HepG2 (cell line): ENCODE measurements at regions of chr19 and their contacts with region 1.

Region 1: DNA sequence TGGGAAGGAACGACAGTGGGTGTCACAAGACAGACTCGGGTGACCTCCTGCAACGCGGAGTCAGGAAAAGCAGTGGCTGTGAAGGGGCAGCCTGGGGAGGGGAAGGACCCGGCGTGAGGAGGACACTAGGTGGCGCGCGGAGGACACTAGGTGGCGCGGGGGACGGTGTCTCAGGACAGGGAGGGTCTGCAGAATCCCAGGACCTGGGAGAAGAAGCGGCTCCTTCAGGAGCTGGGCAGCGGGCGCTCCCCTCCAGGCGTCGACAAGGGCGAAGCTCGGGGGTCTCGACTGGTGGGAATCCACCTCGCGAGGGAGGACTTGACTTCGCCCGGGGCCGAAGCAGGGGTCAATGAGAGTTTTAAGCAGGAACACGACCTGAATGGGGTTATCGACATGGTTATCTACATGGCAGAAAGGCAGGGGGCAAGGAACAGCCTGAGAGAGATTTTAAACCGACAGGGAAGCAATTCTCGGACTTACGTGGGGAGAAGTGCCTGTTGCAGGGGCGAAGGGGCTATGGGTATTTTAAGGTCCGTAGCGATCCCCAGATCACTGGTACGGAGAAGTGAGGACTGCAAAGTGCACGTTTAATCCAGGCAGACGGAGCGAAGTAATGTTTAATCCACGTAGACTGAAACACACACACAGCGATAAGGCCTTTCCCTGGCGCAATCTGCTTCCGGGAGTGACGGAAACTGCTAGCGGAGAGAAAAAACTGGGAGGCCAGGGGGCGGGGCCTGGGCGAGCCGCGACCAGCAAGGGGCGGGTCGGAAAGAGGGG is at the start of gene ZNF616:
- DNase-seq: peak; percentile 89
- ATAC-seq: peak; percentile 97
- H3K4me3 ChIP-seq: peak within 1 kb of the TSS; percentile 92 to 96 (median 93)
- H3K27ac ChIP-seq: peak within 1 kb of the TSS; percentile 94
- H3K4me1 ChIP-seq: peaks cover 25% of the 10 kb centered on the region
- H3K27me3 ChIP-seq: no peaks in the 10 kb centered on the region; a peak in 1 of 5 replicates
- CTCF ChIP-seq: peak; percentile 97
- EP300 ChIP-seq: 0 out of 4 replicates have a peak, but pooled peaks of 1 of the 2 experiments have one; percentile 7
- POLR2A ChIP-seq: peak; percentile 81 to 83
- RAD21 ChIP-seq: peak; percentile 87
- total RNA-seq, gene ZNF616: 10.4 and 19.8 TPM in 2 replicates

Region 2: GRCh38 chr19:51986309-51987291 is 152.8 kb before region 1 on chr19 and contains the start of gene ZNF350:
- CTCF ChIA-PET with region 1: no interaction called
- POLR2A ChIA-PET with region 1: no interaction called
- in situ Hi-C with region 1: no loop called
- intact Hi-C with region 1: no loop called
- DNase-seq: peak; percentile 93
- ATAC-seq: peak; percentile 96
- H3K4me3 ChIP-seq: peak within 1 kb of the TSS; percentile 84 to 94 (median 88)
- H3K27ac ChIP-seq: peak within 1 kb of the TSS; percentile 72
- H3K4me1 ChIP-seq: peaks cover 10% of the 10 kb centered on the region; the same call in 1 of the 2 replicates
- H3K27me3 ChIP-seq: peaks cover 0 to 7% of the 10 kb centered on the region in 2 experiments; a peak in 1 of 5 replicates
- CTCF ChIP-seq: no peak
- EP300 ChIP-seq: 0 out of 4 replicates have a peak, but pooled peaks of 1 of the 2 experiments have one; percentile 46
- POLR2A ChIP-seq: peak; percentile 53 to 72; a peak in 3 of 4 replicates
- RAD21 ChIP-seq: peak; percentile 34; the same call in 1 of the 2 replicates
- total RNA-seq, gene ZNF350: 6.9 and 10.0 TPM in 2 replicates

Region 3: DNA sequence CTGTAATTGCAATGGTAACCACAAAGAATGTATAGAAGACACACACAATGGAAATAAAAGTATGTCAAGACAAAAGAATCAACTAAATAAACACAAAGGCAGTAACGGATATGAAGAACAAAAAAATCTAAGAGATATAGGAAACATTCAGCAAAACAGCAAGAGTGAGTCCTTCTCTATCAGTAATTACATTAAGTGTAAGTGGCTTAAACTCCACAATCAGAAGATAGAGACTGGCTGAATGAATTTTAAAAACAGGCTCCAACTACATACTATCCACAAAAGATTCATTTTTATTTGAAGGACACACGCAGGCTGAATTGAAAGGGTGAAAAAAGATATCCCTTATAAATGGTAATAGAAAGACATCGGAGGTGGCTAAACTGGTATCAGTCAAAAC is 19.2 kb before region 1 on chr19:
- CTCF ChIA-PET with region 1: no interaction called
- POLR2A ChIA-PET with region 1: no interaction called
- in situ Hi-C with region 1: no loop called
- intact Hi-C with region 1: no loop called
- DNase-seq: no peak
- ATAC-seq: no peak
- H3K4me3 ChIP-seq: no peak overlapping the region
- H3K27ac ChIP-seq: no peak overlapping the region
- H3K4me1 ChIP-seq: no peaks in the 10 kb centered on the region
- H3K27me3 ChIP-seq: no peaks in the 10 kb centered on the region
- CTCF ChIP-seq: no peak
- EP300 ChIP-seq: no peak
- POLR2A ChIP-seq: no peak
- RAD21 ChIP-seq: no peak

Region 4: GRCh38 chr19:52237771-52238400 is 98.4 kb after region 1 on chr19:
- CTCF ChIA-PET with region 1: interaction called, 17 read pairs
- POLR2A ChIA-PET with region 1: no interaction called
- in situ Hi-C with region 1: loop called (anchors 10 kb)
- intact Hi-C with region 1: loop called (anchors 1 kb)
- DNase-seq: peak; percentile 52
- ATAC-seq: peak; percentile 66
- H3K4me3 ChIP-seq: no peak overlapping the region
- H3K27ac ChIP-seq: no peak overlapping the region
- H3K4me1 ChIP-seq: peaks cover 10% of the 10 kb centered on the region
- H3K27me3 ChIP-seq: no peaks in the 10 kb centered on the region
- CTCF ChIP-seq: peak; percentile 85
- EP300 ChIP-seq: no peak
- POLR2A ChIP-seq: no peak
- RAD21 ChIP-seq: peak; percentile 69